A549 (cell line): ENCODE measurements at regions of chr3 and their contacts with region 1.

Region 1: DNA sequence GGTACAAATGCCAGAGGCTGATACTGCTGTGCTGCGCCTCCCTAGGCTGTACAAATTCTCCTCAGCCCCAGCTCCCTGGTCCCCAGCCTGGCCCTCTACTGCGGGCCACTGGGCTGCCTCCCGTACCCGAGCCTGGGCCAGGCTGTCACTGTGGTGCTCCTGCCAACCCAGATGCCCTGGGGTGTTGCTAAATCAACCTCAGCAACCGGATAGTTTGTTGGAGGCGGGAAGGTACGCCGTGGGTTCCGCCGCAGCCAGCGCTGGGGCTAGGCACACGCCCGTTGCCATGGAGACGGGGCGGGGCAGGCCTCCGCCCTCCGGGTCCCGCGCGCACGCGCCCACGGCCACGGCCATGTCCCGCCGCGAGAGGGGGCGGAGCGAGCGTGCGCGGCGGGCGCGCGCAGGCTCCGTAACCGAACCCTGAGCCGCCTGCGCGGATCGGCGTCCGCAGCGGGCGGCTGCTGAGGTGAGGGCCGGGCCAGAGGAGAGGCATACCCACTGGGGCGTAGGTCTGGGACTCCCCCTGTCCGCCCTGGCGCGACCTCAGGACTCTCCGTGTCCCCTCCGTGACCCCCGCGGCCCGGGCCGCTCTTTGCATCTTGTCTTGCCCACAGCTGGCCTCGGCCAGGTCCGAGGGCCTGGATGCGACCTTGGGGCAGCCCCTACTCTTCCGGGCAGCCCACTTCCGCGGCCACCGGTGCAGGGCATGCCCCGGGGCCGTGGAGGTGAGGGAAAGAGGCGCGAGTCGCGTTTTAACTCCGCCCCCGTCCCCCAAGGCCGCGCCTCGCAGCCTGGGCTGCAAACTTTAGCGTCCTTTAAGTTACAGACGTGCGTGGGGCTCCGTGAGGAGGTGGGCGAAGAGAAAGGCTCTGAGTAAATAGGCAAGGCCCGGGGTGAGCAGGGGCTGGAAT is at the start of gene TEX264:
- DNase-seq: peak; percentile 77 to 80
- ATAC-seq: peak; percentile 77 to 88
- H3K4me3 ChIP-seq: peak within 1 kb of the TSS; percentile 58
- H3K27ac ChIP-seq: peak within 1 kb of the TSS; percentile 86 to 98
- H3K4me1 ChIP-seq: peaks cover 18% of the 10 kb centered on the region
- CTCF ChIP-seq: no peak
- EP300 ChIP-seq: no peak
- POLR2A ChIP-seq: peak; percentile 82
- RAD21 ChIP-seq: no peak
- polyA plus RNA-seq, gene TEX264: 47.9 and 59.3 TPM in 2 replicates

Region 2: DNA sequence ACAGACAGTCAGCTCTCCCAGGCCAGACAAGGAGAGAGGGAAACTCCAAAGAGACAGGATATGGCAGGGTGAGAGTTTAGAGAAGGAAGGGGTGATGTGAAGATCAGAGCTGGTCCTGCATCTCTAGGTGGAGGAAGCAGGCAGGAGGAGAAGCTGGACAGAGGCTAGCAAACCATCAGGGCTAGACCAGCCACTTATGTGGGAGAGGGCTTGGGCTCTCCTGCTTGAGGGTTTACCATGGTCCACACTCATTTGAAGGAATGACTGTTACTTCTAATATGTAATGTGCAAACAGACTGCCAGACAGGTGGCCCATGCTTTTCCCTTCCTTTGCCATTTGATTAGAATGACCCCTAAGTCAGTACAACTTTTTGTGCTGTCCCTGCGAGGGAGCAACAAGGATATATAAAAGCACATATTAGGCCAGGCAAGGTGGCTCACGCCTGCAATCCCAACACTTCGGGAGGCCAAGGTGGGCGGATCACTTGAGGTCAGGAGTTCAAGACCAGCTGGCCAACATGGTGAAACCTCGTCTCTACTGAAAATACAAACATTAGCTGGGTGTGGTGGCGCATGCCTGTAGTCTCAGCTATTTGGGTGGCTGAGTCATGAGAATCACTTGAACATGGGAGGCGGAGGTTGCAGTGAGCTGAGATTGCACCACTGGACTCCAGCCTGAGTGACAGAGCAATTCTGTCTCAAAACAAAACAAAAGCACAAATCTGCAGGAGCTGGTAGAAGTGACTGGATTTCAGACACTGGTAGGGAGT is 327.0 kb before region 1 on chr3:
- CTCF ChIA-PET with region 1: no interaction called
- POLR2A ChIA-PET with region 1: no interaction called
- DNase-seq: peak in 1 of 2 experiments; percentile 83
- ATAC-seq: peak in 1 of 2 experiments; percentile 81; a peak in 4 of 6 replicates
- H3K4me3 ChIP-seq: no peak overlapping the region
- H3K27ac ChIP-seq: peak overlapping the region; percentile 69 to 87
- H3K4me1 ChIP-seq: peaks cover 38% of the 10 kb centered on the region
- CTCF ChIP-seq: no peak
- EP300 ChIP-seq: no peak; a peak in 1 of 5 replicates
- POLR2A ChIP-seq: no peak
- RAD21 ChIP-seq: no peak

Region 3: GRCh38 chr3:51538459-51539290 is 132.4 kb before region 1 on chr3 and contains the start of gene RAD54L2:
- CTCF ChIA-PET with region 1: interaction called, 10 read pairs
- POLR2A ChIA-PET with region 1: no interaction called
- DNase-seq: peak; percentile 67 to 84
- ATAC-seq: peak; percentile 91 to 94
- H3K4me3 ChIP-seq: peak within 1 kb of the TSS; percentile 100
- H3K27ac ChIP-seq: peak within 1 kb of the TSS; percentile 95
- H3K4me1 ChIP-seq: peaks cover 8% of the 10 kb centered on the region; the same call in 1 of the 3 replicates
- CTCF ChIP-seq: peak; percentile 36
- EP300 ChIP-seq: no peak
- POLR2A ChIP-seq: peak; percentile 50
- RAD21 ChIP-seq: no peak
- polyA plus RNA-seq, gene RAD54L2: 6.4 and 7.7 TPM in 2 replicates

Region 4: DNA sequence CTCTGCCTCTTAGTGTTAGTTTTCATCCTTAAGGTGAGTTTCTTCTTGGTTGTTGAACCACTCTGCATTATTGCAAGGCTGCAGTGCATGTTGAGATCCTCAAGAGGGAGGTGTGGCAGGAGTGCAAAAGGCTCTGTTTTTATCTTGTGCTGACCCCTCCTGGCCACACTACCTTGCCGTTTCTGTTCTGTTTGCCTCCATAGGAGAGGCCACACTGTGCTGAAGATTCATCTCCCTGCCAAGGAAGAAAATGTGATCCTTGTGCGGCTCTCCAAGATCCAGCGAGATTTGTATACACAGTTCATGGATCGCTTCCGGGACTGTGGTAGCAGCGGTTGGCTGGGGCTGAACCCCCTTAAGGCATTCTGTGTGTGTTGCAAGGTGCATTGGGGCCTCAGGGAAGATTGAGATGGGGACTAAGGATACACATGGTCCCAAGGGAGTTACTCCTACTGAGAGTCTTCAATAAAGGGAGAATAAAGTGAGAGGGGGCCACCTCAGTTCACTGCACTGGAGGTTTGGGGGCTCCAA is 33.1 kb before region 1 on chr3:
- CTCF ChIA-PET with region 1: interaction called, 66 read pairs
- POLR2A ChIA-PET with region 1: no interaction called
- DNase-seq: peak; percentile 72 to 83
- ATAC-seq: peak; percentile 99
- H3K4me3 ChIP-seq: no peak overlapping the region
- H3K27ac ChIP-seq: no peak overlapping the region
- H3K4me1 ChIP-seq: no peaks in the 10 kb centered on the region
- CTCF ChIP-seq: peak; percentile 80
- EP300 ChIP-seq: no peak
- POLR2A ChIP-seq: no peak
- RAD21 ChIP-seq: peak; percentile 58 to 76

Region 5: DNA sequence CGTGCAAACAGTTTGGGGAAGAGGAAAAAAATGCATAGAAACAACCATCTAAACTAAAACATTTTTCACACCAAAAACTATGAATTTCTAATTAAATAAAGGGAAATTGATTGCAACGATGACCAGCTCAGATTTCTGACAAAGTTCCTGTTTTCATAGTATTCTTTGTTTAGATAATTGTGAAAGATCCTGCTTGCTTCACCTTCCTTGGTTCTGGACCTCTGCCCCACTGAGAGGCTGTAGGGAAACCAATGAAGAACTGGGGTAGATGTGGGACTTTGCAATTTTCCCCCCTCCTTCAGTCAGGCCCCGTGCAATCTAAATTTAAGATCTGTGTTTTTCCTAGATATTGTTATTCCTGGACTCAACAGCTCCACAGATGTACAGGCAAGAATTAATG is 13.8 kb before region 1 on chr3:
- CTCF ChIA-PET with region 1: interaction called, 21 read pairs
- POLR2A ChIA-PET with region 1: no interaction called
- DNase-seq: no peak
- ATAC-seq: no peak
- H3K4me3 ChIP-seq: no peak overlapping the region
- H3K27ac ChIP-seq: no peak overlapping the region
- H3K4me1 ChIP-seq: no peaks in the 10 kb centered on the region
- CTCF ChIP-seq: no peak
- EP300 ChIP-seq: no peak
- POLR2A ChIP-seq: no peak
- RAD21 ChIP-seq: no peak